Kidney (tissue), 22 donors: ENCODE measurements at regions of chr10 and their contacts with region 1.

Region 1: DNA sequence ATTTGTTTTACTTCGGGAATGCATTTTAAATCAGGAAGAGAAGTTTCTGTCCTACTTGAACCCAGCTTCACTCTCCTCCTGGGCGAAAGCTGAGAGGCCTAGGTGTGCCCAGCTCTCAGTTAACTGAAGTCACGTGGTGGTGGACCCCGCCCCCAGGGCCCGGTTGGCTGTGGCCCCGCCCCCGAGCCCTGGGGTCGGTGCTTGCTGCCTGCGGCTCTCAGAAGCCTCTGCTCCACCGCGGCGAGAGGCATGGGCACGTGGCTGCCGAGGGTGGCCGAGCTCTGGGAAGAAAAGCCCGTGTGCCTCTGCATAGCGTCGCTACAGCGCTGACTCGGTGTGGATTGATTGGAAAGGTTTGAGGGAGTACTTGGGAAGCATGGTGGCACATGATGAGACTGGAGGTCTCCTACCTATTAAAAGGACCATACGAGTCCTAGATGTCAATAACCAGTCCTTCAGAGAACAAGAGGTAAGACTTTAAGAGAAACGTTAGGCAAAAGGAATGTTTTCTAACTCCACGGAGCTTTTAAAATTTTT is 34.1 kb downstream of the NET1 start:
- DNase-seq: peak; percentile 95 to 97 (median 96)
- H3K4me3 ChIP-seq: peak overlapping the region; percentile 89 to 99 (median 93)
- H3K27ac ChIP-seq: peak overlapping the region; percentile 88 to 92
- H3K4me1 ChIP-seq: peaks cover 0 to 5% (median 0%) of the 10 kb centered on the region in 3 donors
- H3K27me3 ChIP-seq: no peaks in the 10 kb centered on the region
- CTCF ChIP-seq: no peak

Region 2: DNA sequence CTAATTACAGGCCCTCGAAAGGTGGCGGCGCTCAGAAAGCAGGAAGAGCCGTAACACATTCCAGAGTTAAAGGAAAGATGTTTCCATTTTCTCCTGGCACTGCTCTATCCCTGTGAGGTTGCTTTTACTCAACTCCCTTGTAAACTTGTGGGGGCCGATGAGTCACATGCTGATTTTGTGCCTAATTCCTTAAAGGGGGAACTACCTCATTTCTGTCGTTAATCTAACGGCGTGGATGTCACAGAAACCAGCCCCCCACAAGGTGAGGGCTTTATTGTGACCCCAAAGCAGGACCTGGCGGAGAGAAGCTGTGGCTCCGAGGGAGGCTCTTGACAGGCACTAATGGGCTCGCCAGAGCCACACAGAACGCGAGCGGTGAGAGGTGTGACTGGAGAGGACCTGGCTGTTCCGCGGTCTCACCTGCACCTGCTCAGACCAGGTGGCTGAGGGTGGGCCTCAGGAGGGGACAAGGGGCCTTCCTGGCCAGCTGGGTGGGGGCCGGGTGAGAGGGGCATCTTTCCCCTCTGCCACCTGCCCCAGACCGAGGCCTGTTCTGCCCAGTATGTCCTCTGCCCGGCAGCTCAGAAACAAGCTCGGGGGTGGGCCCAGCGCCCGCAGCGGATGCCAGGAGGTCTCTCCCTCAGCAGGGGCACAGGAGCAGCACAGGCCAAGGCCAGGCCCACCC is 129.2 kb after region 1 on chr10:
- intact Hi-C with region 1: no loop called
- DNase-seq: peak in 2 of 5 donors; percentile 62 to 64
- H3K4me3 ChIP-seq: no peak overlapping the region
- H3K27ac ChIP-seq: no peak overlapping the region
- H3K4me1 ChIP-seq: peaks cover 6 to 16% (median 8%) of the 10 kb centered on the region in 3 donors
- H3K27me3 ChIP-seq: no peaks in the 10 kb centered on the region
- CTCF ChIP-seq: no peak

Region 3: DNA sequence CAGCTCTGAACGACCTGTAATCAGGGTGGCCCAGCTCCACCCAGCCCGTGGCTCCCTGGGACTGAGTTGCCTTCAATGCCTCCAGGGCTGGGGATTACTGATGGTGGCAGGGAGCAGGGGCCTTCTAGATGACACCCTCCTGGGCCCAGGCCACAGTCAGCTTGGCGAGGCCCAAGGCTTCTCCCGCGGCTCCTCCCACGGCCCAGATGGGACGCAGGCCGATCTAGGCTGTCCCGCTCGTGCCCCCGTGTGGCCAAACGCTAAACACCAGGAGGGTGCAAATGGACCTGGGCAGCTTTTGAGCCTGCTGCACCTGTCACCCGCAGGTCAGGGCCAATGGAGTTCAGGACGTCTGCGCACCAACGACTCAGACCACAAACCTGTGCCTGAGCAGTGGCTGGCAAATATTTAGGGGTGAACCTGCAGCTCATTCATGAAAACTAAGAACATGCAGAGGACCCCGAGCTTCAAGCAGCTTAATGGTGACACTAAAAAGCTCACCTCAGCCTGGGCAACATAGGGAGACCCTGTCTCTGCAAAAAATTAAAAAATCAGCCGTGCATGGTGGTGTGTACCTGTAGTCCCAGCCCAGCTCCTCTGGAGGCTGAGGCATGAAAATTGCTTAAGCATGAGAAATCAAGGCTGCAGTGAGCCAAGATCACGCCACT is 176.8 kb after region 1 on chr10:
- intact Hi-C with region 1: loop called (anchors 5 kb)
- DNase-seq: peak; percentile 87 to 95 (median 90)
- H3K4me3 ChIP-seq: no peak overlapping the region
- H3K27ac ChIP-seq: no peak overlapping the region
- H3K4me1 ChIP-seq: peaks cover 0 to 13% (median 2%) of the 10 kb centered on the region in 3 donors
- H3K27me3 ChIP-seq: no peaks in the 10 kb centered on the region
- CTCF ChIP-seq: peak; percentile 96

Region 4: DNA sequence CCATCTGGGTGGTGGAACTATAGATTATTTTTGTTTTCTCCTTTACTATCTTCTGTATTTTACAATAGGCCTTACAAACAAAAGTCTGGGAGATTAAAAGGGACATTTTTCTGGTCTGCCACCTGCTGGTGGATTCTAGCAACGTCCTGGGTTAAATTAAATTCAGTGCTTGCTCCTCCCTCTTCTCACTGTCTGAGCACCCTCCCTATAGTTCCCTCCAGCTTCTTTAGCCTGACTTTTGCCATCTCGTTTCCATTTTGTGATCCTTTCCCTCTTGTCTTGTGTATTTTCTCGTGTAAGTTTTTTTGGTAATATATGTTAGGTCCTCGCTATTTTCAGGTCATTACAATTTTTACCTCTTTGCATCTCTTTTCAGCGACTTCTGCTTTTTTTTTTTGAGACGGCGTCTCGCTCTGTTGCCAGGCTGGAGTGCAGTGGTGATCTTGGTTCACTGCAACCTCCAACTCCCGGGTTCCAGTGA is 427.1 kb after region 1 on chr10:
- intact Hi-C with region 1: loop called (anchors 10 kb)
- DNase-seq: peak in 4 of 5 donors; percentile 76 to 91 (median 83)
- H3K4me3 ChIP-seq: no peak overlapping the region
- H3K27ac ChIP-seq: no peak overlapping the region
- H3K4me1 ChIP-seq: no peaks in the 10 kb centered on the region
- H3K27me3 ChIP-seq: no peaks in the 10 kb centered on the region
- CTCF ChIP-seq: peak; percentile 78

Region 5: DNA sequence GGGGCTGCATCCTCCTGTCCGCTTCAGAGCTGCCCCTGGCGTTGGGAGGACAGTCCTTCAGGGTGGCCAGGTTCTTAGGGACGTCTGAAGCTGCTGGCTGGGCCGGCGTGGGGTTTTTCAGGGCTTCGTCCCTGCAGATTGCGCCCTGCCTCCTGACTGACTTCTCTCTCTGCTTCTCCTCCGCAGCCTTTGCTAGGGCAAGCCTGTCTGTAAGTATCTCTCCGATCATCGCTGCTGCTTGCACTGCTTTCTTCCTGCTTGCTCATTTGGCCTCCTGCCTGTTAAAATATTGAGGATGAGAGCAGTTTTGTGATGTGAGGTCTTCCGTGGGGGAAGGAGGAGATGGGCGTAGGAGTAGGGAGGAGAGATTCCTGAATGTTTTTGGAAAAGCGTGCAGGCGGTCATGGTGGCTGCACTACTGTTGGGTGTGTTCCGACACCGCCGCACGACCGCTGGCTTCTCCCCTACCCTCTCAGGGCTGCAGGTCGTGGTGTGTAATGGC is 781.6 kb after region 1 on chr10:
- intact Hi-C with region 1: no loop called
- DNase-seq: peak in 4 of 5 donors; percentile 18 to 74 (median 47)
- H3K4me3 ChIP-seq: no peak overlapping the region
- H3K27ac ChIP-seq: no peak overlapping the region
- H3K4me1 ChIP-seq: peaks cover 0 to 3% (median 0%) of the 10 kb centered on the region in 3 donors
- H3K27me3 ChIP-seq: no peaks in the 10 kb centered on the region
- CTCF ChIP-seq: no peak